AG04450 (cell line): ENCODE measurements at regions of chr5 and their contacts with region 1.

Region 1: DNA sequence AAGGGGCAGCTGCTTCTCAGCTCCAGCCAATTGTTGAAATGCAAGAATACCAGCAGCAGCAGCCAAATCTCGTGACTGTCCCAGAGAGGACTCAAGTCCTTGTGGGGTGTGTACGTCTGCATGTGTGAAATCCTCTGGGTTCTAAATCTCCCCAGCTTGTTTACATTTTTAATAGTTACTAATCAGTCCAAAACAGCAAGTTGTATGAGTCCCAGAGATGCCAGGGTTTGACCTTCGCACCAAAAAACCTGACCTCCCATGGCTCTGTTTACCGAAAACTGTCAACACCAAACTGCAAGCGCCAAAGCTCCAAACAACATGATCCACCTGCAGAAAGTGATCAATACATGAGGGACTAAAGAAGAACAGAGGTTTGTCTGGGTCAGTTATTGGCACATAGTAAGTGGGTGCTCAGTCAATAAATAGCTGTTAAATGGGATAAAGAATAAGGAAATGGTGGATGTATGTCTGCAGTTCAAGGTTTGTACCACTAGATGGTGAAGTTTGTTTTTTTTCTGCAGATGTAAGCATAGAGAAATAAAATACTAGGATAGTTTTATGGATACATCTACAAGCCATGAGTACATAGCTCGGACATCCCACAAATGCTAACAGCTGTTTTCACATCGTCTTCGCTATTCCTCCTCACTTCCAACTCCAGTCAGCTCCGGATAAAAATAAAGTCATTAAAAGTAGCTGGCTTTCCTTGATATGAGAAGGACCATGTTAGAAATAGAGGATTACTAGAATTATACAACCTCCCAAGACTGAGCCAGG is 85.3 kb upstream of the ADRB2 start:
- DNase-seq: peak; percentile 72
- H3K4me3 ChIP-seq: no peak overlapping the region
- H3K27ac ChIP-seq: no peak overlapping the region
- H3K27me3 ChIP-seq: no peaks in the 10 kb centered on the region
- CTCF ChIP-seq: peak; percentile 78

Region 2: DNA sequence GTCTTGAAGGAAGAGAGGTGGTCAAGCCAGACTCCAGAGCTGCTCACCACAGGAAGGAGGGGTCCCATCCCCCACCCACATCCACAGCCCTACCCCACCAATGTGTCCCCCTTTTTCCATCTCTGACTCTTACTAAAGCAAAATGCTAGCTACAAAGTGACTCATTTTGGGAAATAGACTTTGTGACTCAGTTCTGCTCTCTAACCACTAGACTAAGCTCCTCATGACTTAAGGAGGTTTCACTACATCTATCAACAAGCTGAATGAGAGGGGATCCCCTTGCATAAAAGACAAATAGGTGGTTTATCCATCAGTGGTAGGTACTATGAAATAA is 50.1 kb after region 1 on chr5:
- CTCF ChIA-PET with region 1: interaction called, 19 read pairs
- POLR2A ChIA-PET with region 1: no interaction called
- DNase-seq: no peak
- H3K4me3 ChIP-seq: no peak overlapping the region
- H3K27ac ChIP-seq: no peak overlapping the region
- H3K27me3 ChIP-seq: no peaks in the 10 kb centered on the region
- CTCF ChIP-seq: no peak

Region 3: DNA sequence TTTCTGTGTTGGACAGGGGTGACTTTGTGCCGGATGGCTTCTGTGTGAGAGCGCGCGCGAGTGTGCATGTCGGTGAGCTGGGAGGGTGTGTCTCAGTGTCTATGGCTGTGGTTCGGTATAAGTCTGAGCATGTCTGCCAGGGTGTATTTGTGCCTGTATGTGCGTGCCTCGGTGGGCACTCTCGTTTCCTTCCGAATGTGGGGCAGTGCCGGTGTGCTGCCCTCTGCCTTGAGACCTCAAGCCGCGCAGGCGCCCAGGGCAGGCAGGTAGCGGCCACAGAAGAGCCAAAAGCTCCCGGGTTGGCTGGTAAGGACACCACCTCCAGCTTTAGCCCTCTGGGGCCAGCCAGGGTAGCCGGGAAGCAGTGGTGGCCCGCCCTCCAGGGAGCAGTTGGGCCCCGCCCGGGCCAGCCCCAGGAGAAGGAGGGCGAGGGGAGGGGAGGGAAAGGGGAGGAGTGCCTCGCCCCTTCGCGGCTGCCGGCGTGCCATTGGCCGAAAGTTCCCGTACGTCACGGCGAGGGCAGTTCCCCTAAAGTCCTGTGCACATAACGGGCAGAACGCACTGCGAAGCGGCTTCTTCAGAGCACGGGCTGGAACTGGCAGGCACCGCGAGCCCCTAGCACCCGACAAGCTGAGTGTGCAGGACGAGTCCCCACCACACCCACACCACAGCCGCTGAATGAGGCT is 85.0 kb after region 1 on chr5 and contains the start of gene ADRB2:
- CTCF ChIA-PET with region 1: interaction called, 17 read pairs
- POLR2A ChIA-PET with region 1: no interaction called
- DNase-seq: peak; percentile 79
- H3K4me3 ChIP-seq: peak within 1 kb of the TSS; percentile 85
- H3K27ac ChIP-seq: peak within 1 kb of the TSS; percentile 70
- H3K27me3 ChIP-seq: no peaks in the 10 kb centered on the region
- CTCF ChIP-seq: no peak
- polyA plus RNA-seq, gene ADRB2: 0.63 and 0.65 TPM in 2 replicates

Region 4: DNA sequence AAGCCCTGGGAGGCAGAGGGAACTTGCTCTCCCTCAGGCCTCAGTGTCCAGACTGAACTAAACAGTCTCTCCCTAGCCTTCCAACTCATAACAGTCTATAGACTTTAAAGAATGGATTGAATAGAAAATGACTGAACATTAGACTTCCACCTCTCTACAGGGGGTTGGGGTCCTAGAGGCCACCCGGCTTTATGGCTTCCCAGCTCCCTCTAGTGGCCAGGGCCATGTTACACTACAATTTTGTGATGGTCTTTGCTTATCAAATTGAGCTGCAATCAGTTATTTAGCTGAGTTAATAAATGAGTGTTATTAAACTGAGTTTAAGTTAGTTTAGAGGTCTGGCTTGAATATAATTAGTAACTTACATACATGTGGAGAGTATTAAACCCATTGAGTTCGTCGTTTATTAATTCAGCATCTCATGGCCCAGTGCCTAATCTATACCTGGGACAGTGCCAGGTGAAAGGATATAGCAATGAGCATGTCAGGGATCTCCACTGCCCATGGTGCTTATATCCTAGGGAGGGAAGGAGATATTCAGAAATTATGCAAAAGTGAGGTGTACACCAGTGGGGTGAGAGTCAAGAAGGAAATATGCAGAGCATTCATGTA is 216.5 kb after region 1 on chr5:
- CTCF ChIA-PET with region 1: interaction called, 171 read pairs
- POLR2A ChIA-PET with region 1: interaction called, 3 read pairs
- DNase-seq: no peak
- H3K4me3 ChIP-seq: no peak overlapping the region
- H3K27ac ChIP-seq: no peak overlapping the region
- H3K27me3 ChIP-seq: no peaks in the 10 kb centered on the region
- CTCF ChIP-seq: peak; percentile 90

Region 5: GRCh38 chr5:148979104-148979723 is 238.1 kb after region 1 on chr5:
- CTCF ChIA-PET with region 1: interaction called, 11 read pairs
- POLR2A ChIA-PET with region 1: no interaction called
- DNase-seq: no peak
- H3K4me3 ChIP-seq: no peak overlapping the region
- H3K27ac ChIP-seq: no peak overlapping the region
- H3K27me3 ChIP-seq: no peaks in the 10 kb centered on the region
- CTCF ChIP-seq: no peak

Region 6: DNA sequence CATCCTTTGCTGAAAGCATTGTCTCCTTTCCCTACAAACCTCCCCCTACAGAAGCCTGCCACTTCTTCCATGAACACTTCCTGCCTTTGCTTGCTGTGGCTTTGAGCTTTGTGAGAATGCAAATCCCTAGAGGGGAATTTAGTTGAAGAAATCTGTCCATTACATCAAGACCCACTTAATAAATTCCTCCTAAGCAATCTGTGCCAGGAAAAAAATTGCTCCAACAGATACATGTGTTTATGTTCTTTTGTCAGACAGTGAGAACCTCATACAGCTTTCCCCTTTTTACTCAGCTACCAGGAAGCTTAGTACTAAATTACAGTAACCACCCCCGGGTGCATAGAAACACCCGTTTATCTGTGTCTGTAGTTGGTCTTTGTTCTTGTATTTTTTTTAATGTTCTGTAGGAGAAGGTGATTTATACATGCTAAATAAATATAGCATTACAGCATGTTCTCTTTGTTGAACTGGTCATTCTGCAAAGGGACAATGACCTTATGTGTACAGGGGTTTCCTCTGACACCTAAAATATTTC is 277.8 kb after region 1 on chr5:
- CTCF ChIA-PET with region 1: interaction called, 26 read pairs
- POLR2A ChIA-PET with region 1: no interaction called
- DNase-seq: no peak
- H3K4me3 ChIP-seq: no peak overlapping the region
- H3K27ac ChIP-seq: no peak overlapping the region
- H3K27me3 ChIP-seq: no peaks in the 10 kb centered on the region
- CTCF ChIP-seq: no peak